Activated CD4-positive, alpha-beta T cell treated with anti-CD3 and anti-CD28 coated beads, Interleukin-2, amount 10 ng/mL, durations not matched to agents 24 days and 14 days (primary cell): ENCODE measurements at regions of chr10 and their contacts with region 1.

Region 1: DNA sequence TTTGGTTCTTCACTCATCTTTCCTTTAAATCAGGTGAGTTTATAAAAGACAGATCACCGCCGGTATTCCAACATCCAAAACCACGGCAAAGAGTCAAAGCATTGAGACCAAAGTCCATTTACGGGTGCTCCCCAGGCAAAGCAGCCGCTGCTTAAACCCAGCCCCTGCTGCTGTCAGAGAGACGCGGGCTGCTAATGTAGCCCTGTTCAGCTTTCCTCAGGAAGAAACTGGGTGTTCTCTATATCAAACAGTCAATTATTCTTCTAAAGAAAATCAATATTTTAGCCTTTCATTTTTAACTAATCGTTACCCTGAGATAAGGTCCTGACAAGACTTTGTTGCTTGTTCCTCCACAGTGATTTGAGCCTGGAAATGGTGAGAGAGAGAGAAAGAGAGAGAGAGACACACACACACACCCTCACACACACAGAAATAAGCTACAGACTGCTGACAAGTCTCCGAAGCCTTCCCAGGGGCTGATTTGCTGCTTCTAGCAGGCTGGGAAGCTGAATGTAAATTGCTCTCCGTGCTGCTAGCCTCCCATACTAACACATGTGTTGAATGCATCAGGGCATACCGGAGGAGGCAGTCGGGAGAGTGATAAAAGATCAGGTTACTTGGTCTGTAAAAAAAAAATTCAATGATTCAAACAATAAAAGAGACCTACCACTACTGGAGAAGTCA is 183.0 kb upstream of the ANK3 start:
- DNase-seq: peak; percentile 76
- H3K4me3 Mint-ChIP-seq: peak overlapping the region; percentile 94
- H3K27ac Mint-ChIP-seq: peak overlapping the region; percentile 90
- H3K4me1 Mint-ChIP-seq: peaks cover 48% of the 10 kb centered on the region
- H3K27me3 Mint-ChIP-seq: no peaks in the 10 kb centered on the region

Region 2: GRCh38 chr10:60536529-60537114 is 36.0 kb before region 1 on chr10:
- intact Hi-C with region 1: loop called (anchors 1 kb)
- DNase-seq: peak; percentile 64
- H3K4me3 Mint-ChIP-seq: peak overlapping the region; percentile 11
- H3K27ac Mint-ChIP-seq: peak overlapping the region; percentile 68
- H3K4me1 Mint-ChIP-seq: peaks cover 37% of the 10 kb centered on the region
- H3K27me3 Mint-ChIP-seq: no peaks in the 10 kb centered on the region

Region 3: DNA sequence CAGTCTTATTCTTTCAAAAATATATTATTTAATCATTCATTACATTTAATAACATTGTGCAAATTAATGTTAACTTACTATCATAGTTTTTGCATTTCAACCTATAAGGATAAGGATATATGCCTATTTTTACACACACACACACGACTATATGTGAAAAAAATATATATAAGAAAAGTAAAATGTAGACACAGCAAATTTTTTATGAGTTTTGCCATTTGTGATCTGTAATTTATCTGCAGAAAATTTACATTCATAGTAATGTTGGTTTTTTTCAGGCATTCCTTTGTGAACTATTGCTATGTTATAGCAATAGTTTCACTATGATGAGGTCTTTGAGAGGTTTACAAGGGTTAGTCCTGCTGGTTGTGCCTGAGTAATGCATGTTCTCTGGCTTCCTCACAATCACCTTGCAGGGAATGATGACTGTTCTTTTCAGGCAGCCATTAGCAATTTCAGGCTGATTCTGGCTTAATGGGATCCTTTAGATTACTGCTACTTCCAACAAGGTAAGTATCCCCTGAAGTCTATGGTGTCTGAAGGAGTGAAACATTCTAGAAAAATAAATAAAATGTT is 21.9 kb after region 1 on chr10:
- intact Hi-C with region 1: loop called (anchors 2 kb)
- DNase-seq: no peak
- H3K4me3 Mint-ChIP-seq: no peak overlapping the region
- H3K27ac Mint-ChIP-seq: no peak overlapping the region
- H3K4me1 Mint-ChIP-seq: peaks cover 19% of the 10 kb centered on the region
- H3K27me3 Mint-ChIP-seq: no peaks in the 10 kb centered on the region

Region 4: GRCh38 chr10:60646966-60647796 is 74.5 kb after region 1 on chr10:
- intact Hi-C with region 1: loop called (anchors 2 kb)
- DNase-seq: peak; percentile 85
- H3K4me3 Mint-ChIP-seq: no peak overlapping the region
- H3K27ac Mint-ChIP-seq: no peak overlapping the region
- H3K4me1 Mint-ChIP-seq: peaks cover 14% of the 10 kb centered on the region
- H3K27me3 Mint-ChIP-seq: no peaks in the 10 kb centered on the region